Heart right ventricle (tissue), 16 donors: ENCODE measurements at regions of chr4 and their contacts with region 1.

Region 1: DNA sequence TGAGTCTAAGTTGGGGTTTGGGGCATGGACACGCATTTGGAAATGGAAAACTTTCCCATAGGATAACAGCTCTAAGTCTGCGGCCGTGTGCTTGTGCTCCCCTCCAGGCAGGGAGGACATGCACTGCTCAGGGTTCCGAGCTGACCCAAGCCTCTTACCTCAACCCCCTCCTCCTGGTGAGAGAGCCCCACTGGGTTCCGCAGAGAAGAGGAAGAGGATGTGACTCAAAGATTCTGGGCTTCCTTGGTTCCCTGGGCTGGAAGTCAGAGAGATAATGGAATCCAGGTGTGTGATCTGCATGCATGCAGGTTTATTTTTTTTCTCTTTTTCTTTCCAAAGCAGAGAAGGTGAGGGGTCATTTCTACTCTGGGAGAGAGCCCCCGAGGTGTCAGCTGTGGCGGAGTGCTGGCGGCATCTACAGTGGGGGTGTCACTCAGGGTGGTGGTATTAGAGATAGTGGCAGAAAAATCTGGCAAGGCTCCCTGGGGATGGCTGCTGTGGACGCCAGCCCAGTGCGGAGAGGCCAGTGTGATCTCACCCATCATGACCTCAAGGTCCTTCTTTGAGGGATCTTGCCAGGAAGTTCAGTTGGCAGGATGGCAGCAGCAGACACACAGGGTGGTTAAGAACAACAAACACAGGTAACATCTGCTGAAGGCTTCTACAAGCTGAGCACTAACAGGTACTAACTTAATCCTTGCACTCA is 168.7 kb upstream of the HAND2 start:
- DNase-seq: peak; percentile 54 to 62
- ATAC-seq: peak; percentile 53 to 96 (median 92)
- H3K4me3 ChIP-seq: peak overlapping the region in 6 of 10 donors; percentile 13 to 37 (median 30)
- H3K27ac ChIP-seq: peak overlapping the region; percentile 36 to 86 (median 66)
- H3K4me1 ChIP-seq: peaks cover 0 to 36% (median 0%) of the 10 kb centered on the region in 9 donors
- H3K27me3 ChIP-seq: no peaks in the 10 kb centered on the region
- CTCF ChIP-seq: no peak

Region 2: GRCh38 chr4:173039617-173040577 is 658.8 kb before region 1 on chr4:
- intact Hi-C with region 1: no loop called
- DNase-seq: peak in 1 of 2 donors; percentile 36
- ATAC-seq: peak in 7 of 8 donors; percentile 52 to 88 (median 78)
- H3K4me3 ChIP-seq: peak overlapping the region in 2 of 10 donors; percentile 5 to 18
- H3K27ac ChIP-seq: peak overlapping the region in 8 of 10 donors; percentile 27 to 68 (median 40)
- H3K4me1 ChIP-seq: peaks cover 0 to 29% (median 15%) of the 10 kb centered on the region in 9 donors
- H3K27me3 ChIP-seq: peaks cover 0 to 5% (median 0%) of the 10 kb centered on the region in 7 donors
- CTCF ChIP-seq: no peak

Region 3: DNA sequence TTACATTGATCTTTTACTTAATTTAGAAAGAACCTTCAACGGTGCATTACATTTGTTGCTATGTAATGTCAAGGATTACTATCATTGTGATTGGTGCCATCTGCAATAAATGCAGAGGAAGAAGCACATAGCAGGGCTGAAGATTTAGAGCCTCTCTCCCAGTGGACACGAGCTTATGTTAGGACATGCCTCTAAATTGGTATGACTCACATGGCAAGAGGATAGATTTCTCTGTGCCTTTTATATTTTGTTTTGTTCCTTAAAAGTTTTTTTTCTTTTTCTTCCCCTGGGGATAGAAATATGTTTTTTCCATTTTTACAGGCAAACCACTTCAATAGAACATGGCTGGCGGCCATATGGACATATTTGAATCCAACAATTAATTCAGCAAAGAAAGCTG is 36.3 kb after region 1 on chr4:
- intact Hi-C with region 1: loop called in 2 of 10 experiments (anchors 5 kb)
- DNase-seq: no peak
- ATAC-seq: no peak
- H3K4me3 ChIP-seq: no peak overlapping the region
- H3K27ac ChIP-seq: no peak overlapping the region
- H3K4me1 ChIP-seq: peaks cover 0 to 15% (median 0%) of the 10 kb centered on the region in 9 donors
- H3K27me3 ChIP-seq: no peaks in the 10 kb centered on the region
- CTCF ChIP-seq: no peak